ENCODE measurements at regions of chr7 and their contacts with region 1.

Region 1: GRCh38 chr7:106542550-106543220 is 118.3 kb downstream of the CCDC71L start:
- DNase-seq: no peak
- H3K4me3 ChIP-seq: no peak overlapping the region
- H3K27ac ChIP-seq: peak overlapping the region in 3 of 4 donors; percentile 62 to 84 (median 72)
- H3K4me1 ChIP-seq: peaks cover 0 to 18% (median 4%) of the 10 kb centered on the region in 3 donors
- H3K27me3 ChIP-seq: no peaks in the 10 kb centered on the region
- CTCF ChIP-seq: peak; percentile 41 to 73 (median 67)
- POLR2A ChIP-seq: no peak

Region 2: GRCh38 chr7:106418094-106418493 is 124.6 kb before region 1 on chr7:
- intact Hi-C with region 1: loop called (anchors 10 kb)
- DNase-seq: no peak
- H3K4me3 ChIP-seq: no peak overlapping the region
- H3K27ac ChIP-seq: peak overlapping the region; percentile 61 to 86 (median 76)
- H3K4me1 ChIP-seq: peaks cover 16 to 64% (median 53%) of the 10 kb centered on the region in 3 donors
- H3K27me3 ChIP-seq: no peaks in the 10 kb centered on the region
- CTCF ChIP-seq: no peak
- POLR2A ChIP-seq: no peak

Region 3: DNA sequence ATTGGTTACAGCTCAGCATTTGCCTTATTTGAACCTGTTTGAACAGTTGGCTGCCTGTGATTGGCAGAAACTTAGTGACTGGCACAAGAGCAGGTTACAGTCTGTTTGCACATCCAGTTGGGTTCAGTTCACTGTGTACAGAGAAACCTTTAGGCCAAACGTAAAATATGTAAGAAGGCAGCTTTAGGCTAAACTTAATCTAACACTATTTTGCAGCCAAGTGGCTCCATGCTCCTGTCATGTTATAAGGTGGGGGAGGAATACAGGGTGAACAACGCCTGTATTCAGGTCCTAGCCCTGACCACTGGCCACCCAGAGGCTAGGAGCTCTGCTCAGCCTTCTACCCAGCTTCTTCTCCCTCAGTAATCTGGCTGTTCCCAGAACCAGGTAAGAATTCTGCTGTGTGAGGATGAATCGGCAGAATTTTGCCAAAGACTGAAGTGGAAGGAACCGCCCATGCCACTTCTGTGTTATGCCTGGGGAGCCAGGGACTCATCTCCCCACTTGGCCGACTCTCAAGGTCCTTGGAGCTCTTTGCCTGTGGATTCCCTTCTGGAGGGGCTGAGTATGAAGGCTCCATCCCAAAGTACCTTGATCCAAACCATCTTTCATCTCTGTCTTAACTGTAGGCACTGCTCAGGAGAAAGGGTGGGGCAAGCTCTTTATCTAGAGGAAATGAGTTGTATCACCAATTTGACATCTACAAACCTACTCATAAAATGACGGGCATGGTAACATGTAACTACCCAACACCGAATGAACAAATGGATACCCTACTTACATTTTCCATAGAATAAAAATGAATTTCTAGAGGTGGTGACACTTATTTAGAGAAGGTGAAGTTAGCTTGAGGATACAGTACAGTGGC is 93.5 kb before region 1 on chr7:
- intact Hi-C with region 1: no loop called
- DNase-seq: no peak
- H3K4me3 ChIP-seq: no peak overlapping the region
- H3K27ac ChIP-seq: peak overlapping the region in 3 of 4 donors; percentile 48 to 87 (median 53)
- H3K4me1 ChIP-seq: peaks cover 0 to 25% (median 0%) of the 10 kb centered on the region in 3 donors
- H3K27me3 ChIP-seq: no peaks in the 10 kb centered on the region
- CTCF ChIP-seq: no peak
- POLR2A ChIP-seq: no peak

Measured in esophagus squamous epithelium (tissue), 5 donors.